WTC11 (cell line): ENCODE measurements at regions of chr17 and their contacts with region 1.

Region 1: DNA sequence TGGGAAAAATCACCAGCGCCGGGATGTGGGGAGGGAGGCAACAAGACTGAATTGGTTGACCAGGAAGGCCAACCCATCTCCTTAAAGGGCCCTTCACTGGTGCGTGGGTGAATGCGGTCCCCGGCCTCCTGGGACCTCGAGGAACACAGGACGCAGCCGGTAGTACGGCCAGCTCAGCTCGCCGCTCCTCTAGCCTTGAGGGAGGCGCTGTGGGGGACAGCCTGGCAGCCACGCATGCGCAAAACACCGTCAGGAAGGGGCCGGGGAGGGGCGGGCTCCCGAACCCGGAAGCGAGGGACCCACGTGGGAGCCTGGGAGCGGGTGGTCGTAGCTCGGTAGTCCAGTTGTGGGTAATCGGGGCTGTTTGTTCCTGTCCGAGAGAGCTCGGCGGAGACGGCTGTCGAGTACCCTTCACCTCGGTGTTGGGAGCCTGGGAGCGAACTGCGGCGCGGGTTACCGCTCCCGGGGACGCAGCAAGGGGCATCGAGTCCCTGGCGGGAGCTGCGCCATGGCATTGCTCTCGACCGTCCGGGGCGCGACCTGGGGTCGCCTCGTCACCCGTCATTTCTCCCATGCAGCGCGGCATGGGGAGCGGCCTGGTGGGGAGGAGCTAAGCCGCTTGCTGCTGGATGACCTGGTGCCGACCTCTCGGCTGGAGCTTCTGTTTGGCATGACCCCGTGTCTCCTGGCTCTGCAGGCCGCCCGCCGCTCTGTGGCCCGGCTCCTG is at the start of gene MRM1:
- DNase-seq: peak; percentile 93
- ATAC-seq: peak; percentile 83
- H3K4me3 Mint-ChIP-seq: peak within 1 kb of the TSS; percentile 84
- H3K27ac Mint-ChIP-seq: peak within 1 kb of the TSS; percentile 90
- H3K4me1 Mint-ChIP-seq: peaks cover 27% of the 10 kb centered on the region
- H3K27me3 Mint-ChIP-seq: no peaks in the 10 kb centered on the region
- CTCF ChIP-seq: no peak
- total RNA-seq, gene MRM1: 12.1 to 16.5 TPM (median 14.2 TPM) in 3 replicates

Region 2: GRCh38 chr17:36611345-36612072 is 10.0 kb after region 1 on chr17:
- CTCF ChIA-PET with region 1: interaction called, 87 read pairs
- POLR2A ChIA-PET with region 1: interaction called, 9 read pairs
- DNase-seq: no peak
- ATAC-seq: no peak
- H3K4me3 Mint-ChIP-seq: no peak overlapping the region
- H3K27ac Mint-ChIP-seq: 0 out of 2 replicates have a peak overlapping the region, but pooled peaks have one; percentile 45
- H3K4me1 Mint-ChIP-seq: peaks cover 44% of the 10 kb centered on the region
- H3K27me3 Mint-ChIP-seq: no peaks in the 10 kb centered on the region
- CTCF ChIP-seq: no peak

Region 3: DNA sequence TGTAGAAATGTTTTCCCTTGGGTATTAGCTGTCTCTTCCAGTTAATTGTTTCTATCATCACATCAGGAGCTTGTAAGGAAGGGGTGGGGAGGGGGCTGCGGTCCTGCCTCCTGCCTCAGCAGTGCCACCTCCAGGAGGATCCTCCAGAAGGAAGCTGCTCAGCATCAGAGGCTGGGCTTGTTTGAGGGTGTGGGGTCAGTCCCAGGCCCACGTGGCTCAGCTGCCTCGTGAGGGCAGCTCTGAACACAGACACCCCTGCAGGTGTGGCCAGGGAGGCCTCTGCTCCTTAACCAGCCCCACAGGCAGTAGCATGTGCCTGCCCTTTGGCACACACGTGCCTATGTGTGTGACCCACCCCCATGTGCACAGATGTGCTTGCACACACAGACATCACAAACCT is 46.2 kb after region 1 on chr17:
- CTCF ChIA-PET with region 1: interaction called, 23 read pairs
- POLR2A ChIA-PET with region 1: no interaction called
- DNase-seq: peak; percentile 47
- ATAC-seq: peak; percentile 84
- H3K4me3 Mint-ChIP-seq: no peak overlapping the region
- H3K27ac Mint-ChIP-seq: no peak overlapping the region
- H3K4me1 Mint-ChIP-seq: peaks cover 26% of the 10 kb centered on the region
- H3K27me3 Mint-ChIP-seq: peaks cover 27% of the 10 kb centered on the region
- CTCF ChIP-seq: no peak

Region 4: GRCh38 chr17:36755586-36755985 is 154.1 kb after region 1 on chr17:
- CTCF ChIA-PET with region 1: interaction called, 12 read pairs
- POLR2A ChIA-PET with region 1: no interaction called
- DNase-seq: peak; percentile 77
- ATAC-seq: peak; percentile 88
- H3K4me3 Mint-ChIP-seq: no peak overlapping the region
- H3K27ac Mint-ChIP-seq: no peak overlapping the region
- H3K4me1 Mint-ChIP-seq: peaks cover 12% of the 10 kb centered on the region
- H3K27me3 Mint-ChIP-seq: no peaks in the 10 kb centered on the region; the same call in 1 of the 2 replicates
- CTCF ChIP-seq: peak; percentile 33

Region 5: DNA sequence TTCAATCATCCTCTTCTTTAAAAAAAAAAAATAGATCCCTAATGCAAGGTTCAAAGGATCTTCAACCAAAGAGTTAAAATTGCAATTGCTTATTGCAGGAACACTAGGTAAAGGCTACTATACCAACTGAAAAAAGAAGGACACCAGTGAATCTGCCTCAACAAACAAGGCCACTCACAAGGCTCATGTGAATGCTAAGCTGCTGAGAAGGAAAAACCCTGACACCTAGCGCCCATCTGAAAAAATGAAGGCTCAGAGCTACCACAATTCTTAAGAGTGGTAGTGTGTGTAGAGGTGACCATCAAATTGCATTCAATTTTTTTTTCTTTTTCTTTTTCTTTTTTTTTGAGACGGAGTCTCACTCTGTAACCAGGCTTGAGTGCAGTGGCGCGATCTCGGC is 572.7 kb after region 1 on chr17:
- CTCF ChIA-PET with region 1: interaction called, 13 read pairs
- POLR2A ChIA-PET with region 1: interaction called, 3 read pairs
- DNase-seq: peak; percentile 32
- ATAC-seq: peak; percentile 93
- H3K4me3 Mint-ChIP-seq: no peak overlapping the region
- H3K27ac Mint-ChIP-seq: no peak overlapping the region; the same call in 1 of the 2 replicates
- H3K4me1 Mint-ChIP-seq: peaks cover 43% of the 10 kb centered on the region
- H3K27me3 Mint-ChIP-seq: no peaks in the 10 kb centered on the region
- CTCF ChIP-seq: 0 out of 2 replicates have a peak, but pooled peaks have one; percentile 14